Tibial artery (tissue), 4 donors: ENCODE measurements at regions of chr10 and their contacts with region 1.

Region 1: DNA sequence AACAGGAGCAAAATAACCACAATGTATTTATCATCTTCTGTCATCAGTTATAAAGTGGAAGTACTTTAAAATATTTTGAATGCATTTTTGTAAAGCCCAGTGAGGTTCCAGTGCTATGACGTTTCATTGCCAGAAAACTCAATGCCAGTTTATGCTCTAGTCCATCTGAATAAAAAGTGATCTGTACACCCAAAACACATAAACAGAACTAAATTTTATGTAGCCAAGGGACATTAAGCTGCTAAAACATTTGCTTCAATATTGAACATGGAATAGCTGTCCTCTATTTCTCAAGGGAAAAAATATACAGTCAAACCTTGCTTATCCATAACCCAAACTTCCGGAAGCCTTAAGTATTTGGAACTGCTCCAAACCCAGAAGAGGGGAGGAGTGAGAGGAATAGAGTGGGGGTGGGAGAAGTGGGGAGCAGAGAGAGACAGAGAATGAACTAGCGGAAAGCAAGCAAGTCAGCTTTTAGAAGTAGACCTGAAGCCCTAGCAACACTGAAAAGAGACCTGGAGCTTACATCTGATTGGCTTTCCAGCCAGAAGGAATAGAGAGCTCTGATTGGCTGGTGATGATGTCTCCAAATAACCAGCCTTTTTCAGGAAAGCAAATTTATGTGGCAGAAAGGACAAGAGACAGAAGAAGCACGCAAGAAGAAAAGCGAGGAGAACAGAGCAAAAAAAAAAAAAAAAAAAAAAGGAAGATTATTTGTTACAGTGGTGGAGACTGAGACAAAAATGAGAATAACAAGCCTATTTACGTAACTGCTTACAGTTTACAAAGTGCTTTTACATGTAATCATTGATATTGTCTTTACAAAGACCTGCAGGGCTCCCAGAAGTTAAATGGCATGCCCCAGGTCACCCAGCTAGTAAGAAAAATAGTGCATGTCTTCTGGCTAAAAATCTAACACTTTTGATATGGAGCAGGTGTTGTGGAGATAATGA is 196.0 kb downstream of the RNLS start:
- DNase-seq: peak in 1 of 2 donors; percentile 21
- H3K4me3 ChIP-seq: peak overlapping the region; percentile 33 to 38
- H3K27ac ChIP-seq: peak overlapping the region; percentile 74 to 76
- H3K4me1 ChIP-seq: peaks cover 0 to 24% (median 16%) of the 10 kb centered on the region in 4 donors
- H3K27me3 ChIP-seq: no peaks in the 10 kb centered on the region
- CTCF ChIP-seq: no peak

Region 2: DNA sequence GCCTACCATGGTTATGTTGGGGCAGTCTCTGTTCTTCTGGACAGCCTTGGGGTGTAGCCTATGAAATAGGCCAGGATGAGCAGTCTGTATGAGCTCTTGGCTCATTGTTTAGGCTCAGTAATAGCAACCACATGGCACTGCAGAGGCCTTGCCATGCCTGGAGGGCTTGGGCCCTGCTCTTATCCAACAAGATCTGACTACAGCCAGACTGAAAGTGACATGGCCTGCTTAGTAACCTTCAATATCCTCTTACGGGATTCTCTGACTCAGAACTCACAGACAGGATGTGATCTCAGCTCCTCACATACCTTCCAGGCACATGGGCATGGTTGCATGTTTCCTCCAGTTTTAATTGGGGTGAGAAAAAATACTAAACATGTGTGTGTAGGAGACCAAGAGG is 234.4 kb before region 1 on chr10:
- intact Hi-C with region 1: loop called (anchors 10 kb)
- DNase-seq: no peak
- H3K4me3 ChIP-seq: no peak overlapping the region
- H3K27ac ChIP-seq: peak overlapping the region; percentile 23 to 39
- H3K4me1 ChIP-seq: peaks cover 0 to 34% (median 13%) of the 10 kb centered on the region in 4 donors
- H3K27me3 ChIP-seq: no peaks in the 10 kb centered on the region
- CTCF ChIP-seq: no peak